ENCODE measurements at regions of chr11 and their contacts with region 1.

Region 1: DNA sequence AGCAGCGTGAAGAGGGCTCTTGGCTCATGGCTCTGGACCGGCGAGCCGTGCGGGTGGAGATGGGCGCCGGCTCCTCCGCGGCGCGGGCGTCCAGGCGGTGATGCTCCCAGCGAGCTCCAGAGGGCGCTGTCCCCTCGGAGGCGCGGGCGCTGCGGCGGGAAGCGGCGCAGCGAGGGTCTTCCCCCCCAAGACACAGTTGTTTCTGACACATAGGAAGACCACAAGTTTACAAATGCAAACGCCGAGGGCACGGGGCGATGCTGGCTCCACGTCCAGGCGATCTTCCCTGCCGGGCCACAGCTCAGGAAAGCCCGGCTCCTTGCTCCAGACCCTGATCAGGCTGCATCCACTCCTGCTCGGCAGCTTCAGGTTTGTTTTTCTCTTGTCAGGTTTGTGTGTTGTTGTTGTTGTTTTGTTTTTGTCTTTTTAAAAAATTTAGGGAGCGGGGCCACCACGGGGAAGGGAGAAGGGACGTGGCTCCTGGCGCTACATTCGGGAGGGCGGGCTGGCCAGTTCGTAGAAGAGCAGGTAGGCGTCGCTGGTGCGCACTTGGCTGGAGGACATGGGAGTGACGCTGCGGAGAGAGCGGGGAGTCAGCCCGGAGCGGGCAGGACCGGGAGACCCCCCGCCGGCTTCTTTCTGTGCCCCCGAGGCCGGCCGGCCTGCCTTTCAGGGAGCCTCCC is 10.0 kb upstream of the MFRP start:
- DNase-seq: peak; percentile 81
- ATAC-seq: peak; percentile 96
- H3K4me3 Mint-ChIP-seq: peak overlapping the region; percentile 73
- H3K27ac Mint-ChIP-seq: peak overlapping the region; percentile 78
- H3K4me1 Mint-ChIP-seq: peaks cover 13% of the 10 kb centered on the region
- H3K27me3 Mint-ChIP-seq: peaks cover 34% of the 10 kb centered on the region

Region 2: GRCh38 chr11:119373921-119374631 is 17.6 kb after region 1 on chr11:
- CTCF ChIA-PET with region 1: interaction called, 109 read pairs
- POLR2A ChIA-PET with region 1: no interaction called
- DNase-seq: peak; percentile 55
- ATAC-seq: peak; percentile 45
- H3K4me3 Mint-ChIP-seq: no peak overlapping the region
- H3K27ac Mint-ChIP-seq: no peak overlapping the region
- H3K4me1 Mint-ChIP-seq: peaks cover 16% of the 10 kb centered on the region
- H3K27me3 Mint-ChIP-seq: peaks cover 9% of the 10 kb centered on the region

Region 3: DNA sequence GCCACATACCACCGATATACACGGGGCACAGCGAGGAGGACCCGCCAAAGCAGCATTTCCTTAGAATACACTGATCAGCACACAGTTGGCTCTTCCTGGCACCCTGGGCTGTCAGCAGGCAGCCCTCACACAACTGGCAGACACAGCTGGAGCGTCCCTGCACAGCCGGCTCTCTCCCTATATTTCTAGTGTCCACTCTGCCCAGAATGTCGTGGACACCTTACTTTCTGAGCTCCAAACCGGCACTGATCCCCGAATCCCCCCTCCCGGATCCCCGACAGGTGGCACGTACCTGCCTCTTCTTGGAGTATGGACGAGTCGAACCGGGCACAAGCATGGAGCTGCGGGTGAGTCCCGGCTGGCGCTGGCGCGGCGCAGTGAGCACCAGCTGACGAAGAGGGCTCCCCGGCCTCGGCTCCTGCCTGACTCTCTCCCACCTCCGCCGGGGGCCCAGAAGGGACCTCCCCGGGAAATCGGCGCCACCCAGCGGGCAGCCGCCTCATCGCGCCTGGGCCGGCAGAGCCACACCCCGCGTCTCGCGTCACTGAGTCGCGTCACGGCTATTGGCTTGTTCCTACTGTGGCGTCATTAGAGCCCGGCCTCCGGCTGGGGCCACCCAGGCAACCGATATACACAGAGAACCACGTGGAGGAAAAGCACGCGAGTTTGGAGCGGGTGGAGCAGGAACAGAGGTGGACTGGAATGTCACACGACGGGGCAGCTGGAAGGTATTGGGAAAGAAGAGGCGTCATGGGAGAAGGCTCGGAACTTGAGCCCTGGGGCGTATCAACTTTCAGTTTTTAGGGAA is 24.9 kb after region 1 on chr11 and contains the start of gene USP2:
- CTCF ChIA-PET with region 1: interaction called, 109 read pairs
- POLR2A ChIA-PET with region 1: interaction called, 3 read pairs
- DNase-seq: peak; percentile 96
- ATAC-seq: peak; percentile 98
- H3K4me3 Mint-ChIP-seq: no peak within 1 kb of the TSS
- H3K27ac Mint-ChIP-seq: peak within 1 kb of the TSS; percentile 71
- H3K4me1 Mint-ChIP-seq: peaks cover 12% of the 10 kb centered on the region
- H3K27me3 Mint-ChIP-seq: peaks cover 9% of the 10 kb centered on the region
- total RNA-seq, gene USP2: 0.55 to 0.68 TPM

Region 4: GRCh38 chr11:119468511-119468910 is 112.0 kb after region 1 on chr11:
- CTCF ChIA-PET with region 1: interaction called, 94 read pairs
- POLR2A ChIA-PET with region 1: no interaction called
- DNase-seq: no peak
- ATAC-seq: no peak
- H3K4me3 Mint-ChIP-seq: no peak overlapping the region
- H3K27ac Mint-ChIP-seq: no peak overlapping the region
- H3K4me1 Mint-ChIP-seq: no peaks in the 10 kb centered on the region
- H3K27me3 Mint-ChIP-seq: peaks cover 34% of the 10 kb centered on the region

Region 5: DNA sequence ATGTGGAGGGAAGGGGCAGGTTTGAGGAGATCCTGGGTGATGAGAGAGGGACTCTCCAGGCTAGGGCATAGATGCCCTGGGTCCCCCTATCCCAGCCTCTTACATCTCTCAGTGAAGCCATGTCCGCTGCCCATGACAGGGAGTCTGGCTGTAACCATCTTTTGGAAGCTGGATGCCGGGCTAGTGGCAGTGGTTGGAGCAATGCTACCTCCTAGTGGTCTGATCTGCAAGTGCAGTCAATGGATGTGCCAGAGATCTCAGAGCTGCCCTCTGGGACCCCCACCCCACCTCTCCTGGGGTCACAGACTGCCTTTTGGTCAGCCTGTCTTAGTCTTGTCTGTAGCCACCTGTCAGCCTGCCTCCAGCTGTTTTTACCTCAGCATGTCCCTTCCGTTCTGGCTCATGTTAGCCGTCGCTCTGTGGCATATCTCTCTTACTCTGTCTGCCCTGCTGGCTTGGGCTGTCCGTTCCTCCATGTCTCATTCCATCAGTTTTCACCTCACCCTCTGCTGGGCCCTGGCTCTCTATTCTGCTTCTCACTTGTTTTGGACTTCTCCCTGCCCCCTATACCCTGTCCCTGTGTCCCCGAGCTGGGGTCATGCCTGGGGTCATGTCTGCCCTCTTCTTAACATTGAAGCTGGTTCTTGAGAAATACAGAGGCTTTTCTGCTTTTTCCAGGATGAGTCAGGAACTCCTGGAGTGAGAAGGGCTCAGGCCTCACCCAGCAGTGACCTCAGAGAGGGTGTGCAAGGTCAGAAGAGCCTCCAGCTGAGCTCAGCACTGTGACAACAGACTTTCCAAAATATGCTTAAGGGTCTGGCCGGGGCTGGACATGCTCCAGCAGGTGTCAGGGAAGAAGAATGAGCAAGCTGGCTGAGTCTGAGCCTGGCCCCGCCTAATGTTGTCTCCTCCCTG is 118.4 kb after region 1 on chr11:
- CTCF ChIA-PET with region 1: interaction called, 94 read pairs
- POLR2A ChIA-PET with region 1: interaction called, 4 read pairs
- DNase-seq: peak; percentile 63
- ATAC-seq: peak; percentile 59
- H3K4me3 Mint-ChIP-seq: no peak overlapping the region
- H3K27ac Mint-ChIP-seq: no peak overlapping the region
- H3K4me1 Mint-ChIP-seq: no peaks in the 10 kb centered on the region
- H3K27me3 Mint-ChIP-seq: peaks cover 4% of the 10 kb centered on the region